BJ (cell line): ENCODE measurements at regions of chr9 and their contacts with region 1.

Region 1: DNA sequence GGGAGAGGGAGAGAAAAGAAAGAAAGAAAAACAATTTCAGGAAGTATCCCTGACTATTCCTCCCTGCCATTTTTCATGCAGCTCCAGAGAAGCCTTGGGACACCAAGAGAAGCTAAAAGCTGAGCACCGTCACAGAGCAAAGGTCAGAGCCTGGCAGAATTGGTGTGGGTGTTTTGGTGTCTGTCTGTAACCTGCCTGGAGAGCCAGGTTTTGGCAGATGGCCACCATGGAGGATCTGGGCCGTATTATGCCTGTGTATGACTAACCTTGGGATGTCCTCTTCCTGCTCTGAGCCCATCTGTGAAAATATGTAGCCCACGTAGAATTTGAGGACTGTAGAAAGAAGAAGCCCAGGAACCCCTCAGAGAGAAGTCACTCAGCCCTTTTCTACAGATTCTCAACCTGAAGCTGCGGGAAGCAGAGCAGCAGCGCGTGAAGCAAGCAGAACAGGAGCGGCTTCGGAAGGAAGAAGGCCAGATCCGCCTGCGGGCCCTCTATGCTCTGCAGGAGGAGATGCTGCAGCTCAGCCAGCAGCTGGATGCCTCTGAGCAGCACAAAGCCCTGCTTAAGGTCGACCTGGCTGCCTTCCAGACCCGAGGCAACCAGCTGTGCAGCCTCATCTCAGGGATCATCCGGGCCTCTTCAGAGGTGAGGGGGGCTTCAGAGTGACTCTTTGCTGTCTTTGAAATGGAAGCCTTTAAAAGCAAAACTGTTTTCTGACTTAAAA is 18.8 kb downstream of the GLE1 start:
- DNase-seq: no peak
- H3K4me3 ChIP-seq: no peak overlapping the region
- H3K27me3 ChIP-seq: no peaks in the 10 kb centered on the region
- CTCF ChIP-seq: no peak

Region 2: GRCh38 chr9:128455849-128456612 is 67.3 kb before region 1 on chr9 and contains the start of gene ODF2:
- CTCF ChIA-PET with region 1: no interaction called
- POLR2A ChIA-PET with region 1: no interaction called
- DNase-seq: peak; percentile 61
- H3K4me3 ChIP-seq: peak within 1 kb of the TSS; percentile 90
- H3K27me3 ChIP-seq: no peaks in the 10 kb centered on the region
- CTCF ChIP-seq: no peak
- polyA plus RNA-seq, gene ODF2: 16.3 and 21.5 TPM in 2 replicates

Region 3: GRCh38 chr9:128493424-128493823 is 29.9 kb before region 1 on chr9:
- CTCF ChIA-PET with region 1: no interaction called
- POLR2A ChIA-PET with region 1: no interaction called
- DNase-seq: no peak
- H3K4me3 ChIP-seq: no peak overlapping the region
- H3K27me3 ChIP-seq: no peaks in the 10 kb centered on the region
- CTCF ChIP-seq: no peak

Region 4: GRCh38 chr9:128540634-128541360 is 17.4 kb after region 1 on chr9:
- CTCF ChIA-PET with region 1: no interaction called
- POLR2A ChIA-PET with region 1: interaction called, 21 read pairs
- DNase-seq: no peak
- H3K4me3 ChIP-seq: no peak overlapping the region
- H3K27me3 ChIP-seq: no peaks in the 10 kb centered on the region
- CTCF ChIP-seq: no peak